ENCODE measurements at regions of chr5 and their contacts with region 1.

Region 1: DNA sequence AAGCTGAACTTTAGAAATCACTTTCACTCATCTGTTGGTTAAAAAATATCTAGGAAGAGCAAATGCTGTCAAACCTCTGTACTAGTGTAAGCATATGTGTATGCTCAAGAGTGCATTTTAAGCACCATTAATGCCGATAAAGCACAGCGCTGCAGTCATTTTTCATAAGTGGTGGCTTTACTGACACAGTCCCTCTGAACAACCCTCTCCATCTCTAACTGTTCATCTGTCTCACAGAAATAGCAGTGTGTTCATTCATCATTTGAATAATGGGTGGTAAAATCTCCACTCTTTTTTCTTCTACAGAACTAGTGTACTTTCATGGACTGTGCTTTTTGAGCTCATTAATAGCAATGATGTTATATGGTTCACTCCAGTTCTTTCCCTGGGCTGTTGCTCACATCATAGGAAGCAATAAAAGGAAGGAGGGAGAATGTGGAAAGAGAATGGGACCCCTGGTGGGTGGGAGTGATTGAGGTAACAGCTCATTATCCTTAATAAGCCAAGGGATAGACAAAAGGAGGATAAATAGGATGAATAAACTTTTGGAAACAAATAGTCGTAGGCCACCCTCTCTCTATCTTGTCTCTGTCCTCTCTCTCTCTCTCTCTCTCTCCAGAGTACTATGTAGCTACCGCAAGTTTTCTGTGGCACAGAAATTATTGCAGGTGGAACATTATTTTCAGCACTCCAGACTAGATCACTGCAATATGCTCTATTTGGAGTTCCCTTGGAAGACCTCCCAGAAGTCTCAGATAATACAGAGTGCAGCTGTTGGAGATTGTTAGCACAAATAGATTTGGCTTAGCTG is 117.9 kb upstream of the PRDM9 start:
- DNase-seq: no peak
- ATAC-seq: peak; percentile 95

Region 2: GRCh38 chr5:21889616-21890015 is 1499.9 kb before region 1 on chr5:
- intact Hi-C with region 1: loop called in 1 of 2 experiments (anchors 5 kb)
- DNase-seq: no peak
- ATAC-seq: no peak

Region 3: DNA sequence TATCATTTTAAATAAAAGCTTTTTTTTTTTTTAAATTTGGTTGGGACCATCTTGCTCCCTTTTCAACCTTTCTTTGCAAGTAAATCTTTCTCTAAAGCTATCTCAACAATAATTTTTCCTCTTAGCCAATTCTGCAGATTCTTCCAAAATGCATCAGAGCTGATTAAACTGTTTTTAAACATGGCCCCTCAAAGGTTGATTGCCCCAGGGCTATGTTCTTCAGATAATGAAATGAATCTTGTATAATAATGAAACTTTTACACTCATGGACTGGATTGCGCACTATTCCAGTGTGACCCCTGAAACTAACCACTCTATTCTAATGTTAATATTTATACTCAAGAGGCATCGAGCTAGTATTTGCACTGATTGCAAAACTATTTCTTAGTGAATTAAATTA is 104.8 kb before region 1 on chr5:
- intact Hi-C with region 1: no loop called
- DNase-seq: no peak
- ATAC-seq: no peak